MCF 10A (cell line): ENCODE measurements at regions of chr11 and their contacts with region 1.

Region 1: DNA sequence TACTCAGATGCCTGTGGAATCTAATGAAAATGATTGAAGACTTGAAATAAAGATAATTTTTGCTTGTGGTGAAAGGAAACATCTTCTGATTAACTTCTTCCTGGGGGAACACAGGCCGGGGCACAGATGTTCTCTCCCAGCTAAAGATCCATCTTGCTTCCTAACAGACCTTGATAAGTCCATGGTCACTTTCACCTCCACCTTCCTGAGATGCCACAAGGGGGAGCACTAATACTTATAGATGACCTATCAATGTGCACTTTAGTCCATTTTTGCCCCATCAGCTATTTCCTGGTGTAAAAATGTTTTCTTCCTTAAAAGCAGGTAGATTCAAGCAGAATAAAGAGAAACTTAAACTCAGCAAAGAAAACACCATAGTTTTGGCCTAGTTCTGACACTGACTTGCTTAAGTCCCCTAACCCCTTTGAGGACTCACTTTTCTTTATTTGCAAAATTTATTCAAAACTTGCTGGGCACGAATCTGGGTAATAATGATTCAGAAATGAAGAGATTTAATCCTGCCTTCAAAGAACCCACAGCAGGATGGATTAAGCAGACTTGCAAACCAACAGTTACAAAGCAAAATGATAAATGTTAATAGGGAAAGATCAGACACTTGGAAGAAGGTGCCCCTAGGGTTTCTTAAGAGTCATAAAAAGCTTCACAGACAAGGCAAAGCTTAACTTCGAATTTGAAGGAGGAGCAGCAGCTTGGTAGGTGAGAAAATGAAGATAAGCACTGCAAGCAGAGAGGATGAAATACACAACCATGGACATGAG is 158.7 kb downstream of the RAB38 start:
- DNase-seq: peak; percentile 83
- H3K4me3 Mint-ChIP-seq: no peak overlapping the region
- H3K27ac Mint-ChIP-seq: peak overlapping the region; percentile 43
- H3K4me1 Mint-ChIP-seq: peaks cover 6% of the 10 kb centered on the region
- H3K27me3 Mint-ChIP-seq: no peaks in the 10 kb centered on the region
- CTCF ChIP-seq: peak; percentile 68

Region 2: DNA sequence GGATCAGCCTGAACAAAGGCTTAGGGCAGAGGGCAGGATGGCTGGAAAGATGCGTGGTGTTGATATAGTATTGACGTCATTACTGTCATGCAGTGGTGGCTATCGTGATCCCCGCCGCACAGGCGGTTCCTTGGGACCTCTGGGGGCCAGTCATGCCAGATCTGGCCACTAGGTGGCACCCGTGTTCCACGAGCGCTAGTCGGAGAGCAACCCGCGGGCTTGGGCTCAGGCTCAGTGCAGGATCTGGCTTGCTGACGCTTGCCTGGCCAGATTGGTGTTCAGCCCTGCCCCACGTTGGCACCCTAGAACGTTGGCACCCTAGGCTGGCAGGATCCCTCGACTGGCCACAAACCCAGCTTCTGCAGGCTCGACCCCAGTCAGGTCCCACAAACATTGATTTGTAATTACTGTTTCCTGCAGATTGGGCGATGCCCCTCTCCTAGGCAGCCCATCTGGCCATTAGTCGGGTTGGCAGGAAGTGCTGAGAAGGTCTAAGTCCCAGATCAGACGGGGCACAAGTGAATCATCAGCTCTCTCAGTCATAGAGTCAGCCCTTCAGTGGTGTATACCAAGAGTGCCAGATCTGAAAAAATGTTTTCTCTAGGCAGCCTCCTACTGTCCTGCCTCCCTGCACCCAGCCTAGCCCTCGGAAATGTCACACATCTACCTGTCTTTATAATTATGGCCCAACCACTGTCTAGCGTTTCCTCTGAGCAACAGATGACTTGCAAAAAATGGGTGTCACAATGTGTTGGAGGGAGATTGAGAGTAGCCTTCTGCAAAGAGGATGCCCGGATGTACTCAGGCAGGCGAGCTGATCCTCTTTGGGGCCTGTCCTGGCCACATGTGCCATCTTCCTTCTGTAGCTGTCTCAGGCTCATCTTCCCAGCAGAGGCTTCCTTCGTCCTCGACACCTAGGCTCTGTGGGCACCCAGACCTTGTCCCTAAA is 663.5 kb before region 1 on chr11:
- CTCF ChIA-PET with region 1: no interaction called
- POLR2A ChIA-PET with region 1: no interaction called
- intact Hi-C with region 1: loop called (anchors 1 kb)
- DNase-seq: peak; percentile 79
- H3K4me3 Mint-ChIP-seq: no peak overlapping the region
- H3K27ac Mint-ChIP-seq: no peak overlapping the region
- H3K4me1 Mint-ChIP-seq: peaks cover 6% of the 10 kb centered on the region
- H3K27me3 Mint-ChIP-seq: no peaks in the 10 kb centered on the region
- CTCF ChIP-seq: peak; percentile 98

Region 3: GRCh38 chr11:87722756-87723565 is 293.6 kb before region 1 on chr11:
- CTCF ChIA-PET with region 1: interaction called, 12 read pairs
- POLR2A ChIA-PET with region 1: no interaction called
- intact Hi-C with region 1: no loop called
- DNase-seq: peak; percentile 43
- H3K4me3 Mint-ChIP-seq: no peak overlapping the region
- H3K27ac Mint-ChIP-seq: no peak overlapping the region
- H3K4me1 Mint-ChIP-seq: peaks cover 11% of the 10 kb centered on the region
- H3K27me3 Mint-ChIP-seq: peaks cover 12% of the 10 kb centered on the region
- CTCF ChIP-seq: peak; percentile 84

Region 4: DNA sequence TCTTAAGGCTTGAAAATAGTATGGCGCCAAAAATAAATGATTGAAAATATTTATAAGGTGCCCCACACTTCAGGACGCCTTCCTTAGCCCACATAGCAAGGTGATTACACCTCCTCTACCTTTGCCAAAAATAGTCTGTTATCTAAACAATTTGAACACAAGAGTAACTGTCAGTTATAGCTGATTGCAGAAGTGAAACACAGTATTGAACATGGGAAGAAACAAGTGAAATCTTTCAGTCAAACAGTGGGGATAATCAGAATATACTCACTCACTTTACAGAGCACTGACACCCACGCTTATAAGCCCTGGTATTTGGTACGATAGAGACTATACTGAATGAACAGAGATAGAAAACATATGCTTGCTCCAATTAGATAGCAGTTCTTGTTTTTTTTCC is 44.4 kb before region 1 on chr11:
- CTCF ChIA-PET with region 1: interaction called, 19 read pairs
- POLR2A ChIA-PET with region 1: interaction called, 3 read pairs
- intact Hi-C with region 1: no loop called
- DNase-seq: no peak
- H3K4me3 Mint-ChIP-seq: no peak overlapping the region
- H3K27ac Mint-ChIP-seq: no peak overlapping the region
- H3K4me1 Mint-ChIP-seq: no peaks in the 10 kb centered on the region
- H3K27me3 Mint-ChIP-seq: no peaks in the 10 kb centered on the region
- CTCF ChIP-seq: no peak

Region 5: DNA sequence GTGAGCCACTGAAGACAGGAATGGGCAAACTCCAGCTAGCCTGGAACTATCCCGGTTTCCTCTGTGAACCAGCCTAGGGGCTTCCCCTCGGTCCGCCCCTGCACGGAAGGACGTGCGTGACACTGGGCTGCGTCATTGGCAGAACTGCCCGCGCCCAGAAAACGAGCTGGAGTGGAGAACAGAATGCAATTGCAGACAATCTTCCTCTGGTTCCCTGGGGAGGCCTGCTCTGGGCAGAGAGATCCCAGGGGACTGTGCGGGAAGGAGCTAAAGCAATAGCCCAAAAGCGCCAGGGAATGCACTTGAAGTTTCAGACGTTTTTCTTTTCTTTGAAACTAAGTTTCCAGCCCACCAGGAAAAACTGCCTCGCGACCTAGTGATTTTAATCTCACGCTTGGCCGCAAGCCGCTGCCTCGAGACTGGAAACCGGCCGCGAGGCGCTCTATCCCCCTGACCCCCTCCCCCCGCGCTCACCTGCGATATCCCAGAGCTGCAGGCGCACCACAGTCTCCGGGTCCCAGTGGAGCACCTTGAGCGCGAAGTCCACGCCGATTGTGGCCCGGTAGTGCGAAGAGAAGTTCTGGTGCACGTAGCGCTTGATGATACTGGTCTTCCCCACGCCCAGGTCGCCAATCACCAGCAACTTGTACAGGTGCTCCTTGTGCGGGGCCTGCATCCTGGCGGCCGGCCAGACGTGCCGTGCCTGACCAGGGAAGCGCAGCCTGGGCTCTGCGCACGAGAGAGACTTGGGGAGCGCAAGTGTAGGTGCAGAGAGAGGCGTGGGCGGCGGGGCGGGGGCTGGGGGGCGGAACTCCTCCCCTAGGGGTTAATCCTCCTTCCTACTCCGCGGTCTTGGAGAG is 158.4 kb after region 1 on chr11 and contains the start of gene RAB38:
- CTCF ChIA-PET with region 1: interaction called, 22 read pairs
- POLR2A ChIA-PET with region 1: interaction called, 4 read pairs
- intact Hi-C with region 1: no loop called
- DNase-seq: peak; percentile 91
- H3K4me3 Mint-ChIP-seq: peak within 1 kb of the TSS; percentile 85
- H3K27ac Mint-ChIP-seq: peak within 1 kb of the TSS; percentile 91
- H3K4me1 Mint-ChIP-seq: peaks cover 40% of the 10 kb centered on the region
- H3K27me3 Mint-ChIP-seq: no peaks in the 10 kb centered on the region
- CTCF ChIP-seq: no peak
- total RNA-seq, gene RAB38: 77.7 and 80.9 TPM in 2 replicates

Region 6: DNA sequence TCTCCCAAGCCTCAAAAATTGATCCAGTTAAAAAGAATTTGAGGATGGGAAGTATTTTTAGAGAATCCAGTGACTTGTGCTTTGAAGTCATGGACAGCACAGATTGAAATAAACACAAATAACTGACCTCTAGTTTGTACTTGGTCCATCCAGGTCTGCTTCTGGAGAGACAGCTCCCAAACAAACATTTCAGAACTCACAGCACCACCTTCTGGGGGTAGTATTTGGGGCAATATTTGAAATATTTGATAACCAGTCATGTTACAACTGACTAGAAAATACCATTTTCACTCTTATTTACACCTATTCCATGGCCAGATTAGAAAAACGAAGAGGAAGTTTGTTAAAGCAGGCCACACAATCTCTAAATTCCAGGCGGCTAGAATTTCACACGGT is 264.7 kb after region 1 on chr11:
- CTCF ChIA-PET with region 1: interaction called, 49 read pairs
- POLR2A ChIA-PET with region 1: interaction called, 5 read pairs
- intact Hi-C with region 1: loop called (anchors 1 kb)
- DNase-seq: peak; percentile 33
- H3K4me3 Mint-ChIP-seq: no peak overlapping the region
- H3K27ac Mint-ChIP-seq: no peak overlapping the region
- H3K4me1 Mint-ChIP-seq: peaks cover 7% of the 10 kb centered on the region
- H3K27me3 Mint-ChIP-seq: no peaks in the 10 kb centered on the region
- CTCF ChIP-seq: peak; percentile 28

Region 7: DNA sequence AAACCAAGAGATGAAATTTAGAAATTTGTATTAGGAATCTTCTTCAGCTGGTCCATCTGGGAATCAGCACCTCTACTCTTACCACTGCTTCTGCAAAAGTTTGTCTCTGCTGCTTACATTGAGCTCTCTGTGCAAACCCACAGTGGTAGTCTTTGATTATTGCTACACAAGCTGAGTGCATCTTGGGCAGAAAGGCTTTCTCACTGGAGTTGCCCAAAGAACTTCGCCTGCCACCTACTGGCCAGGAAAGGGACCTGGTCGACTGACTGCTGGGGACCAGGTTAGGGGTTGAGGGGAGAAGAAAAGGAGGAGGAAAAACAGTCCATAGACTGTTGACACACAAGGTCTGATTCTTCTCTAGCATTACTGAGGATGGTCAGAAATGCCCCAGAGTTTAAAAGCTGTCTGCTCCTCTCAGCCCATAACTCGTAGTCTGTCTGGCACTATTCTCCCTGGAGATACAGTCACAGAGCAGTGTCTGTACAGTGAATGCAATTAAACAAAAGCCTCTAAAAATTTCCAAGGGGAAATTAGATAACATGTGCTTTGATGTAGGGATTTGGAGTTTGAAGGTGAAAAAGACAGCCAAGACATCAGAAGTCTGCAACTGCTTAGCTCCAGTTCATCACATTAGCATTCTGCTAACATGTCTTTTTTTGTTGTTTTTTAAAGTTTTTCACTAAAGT is 535.9 kb after region 1 on chr11:
- CTCF ChIA-PET with region 1: interaction called, 31 read pairs
- POLR2A ChIA-PET with region 1: interaction called, 3 read pairs
- intact Hi-C with region 1: no loop called
- DNase-seq: peak; percentile 74
- H3K4me3 Mint-ChIP-seq: no peak overlapping the region
- H3K27ac Mint-ChIP-seq: no peak overlapping the region
- H3K4me1 Mint-ChIP-seq: peaks cover 11% of the 10 kb centered on the region
- H3K27me3 Mint-ChIP-seq: no peaks in the 10 kb centered on the region
- CTCF ChIP-seq: peak; percentile 37